ENCODE measurements at regions of chr7 and their contacts with region 1.

Region 1: GRCh38 chr7:909358-910329 is 33.3 kb downstream of the GET4 start:
- DNase-seq: peak; percentile 15
- ATAC-seq: peak; percentile 63
- H3K4me3 ChIP-seq: no peak overlapping the region
- H3K27ac ChIP-seq: no peak overlapping the region; the same call in 1 of the 2 replicates
- H3K4me1 ChIP-seq: peaks cover 1% of the 10 kb centered on the region; the same call in 1 of the 2 replicates
- H3K27me3 ChIP-seq: no peaks in the 10 kb centered on the region; the same call in 1 of the 2 replicates
- CTCF ChIP-seq: no peak
- POLR2A ChIP-seq: no peak
- RAD21 ChIP-seq: no peak

Region 2: GRCh38 chr7:379456-380138 is 530.0 kb before region 1 on chr7:
- CTCF ChIA-PET with region 1: no interaction called
- POLR2A ChIA-PET with region 1: no interaction called
- dilution Hi-C with region 1: no loop called
- in situ Hi-C with region 1: no loop called
- intact Hi-C with region 1: no loop called
- DNase-seq: no peak
- ATAC-seq: peak; percentile 27; the same call in 1 of the 2 replicates
- H3K4me3 ChIP-seq: no peak overlapping the region
- H3K27ac ChIP-seq: no peak overlapping the region
- H3K4me1 ChIP-seq: no peaks in the 10 kb centered on the region
- H3K27me3 ChIP-seq: peaks cover 49% of the 10 kb centered on the region
- CTCF ChIP-seq: no peak
- POLR2A ChIP-seq: no peak
- RAD21 ChIP-seq: no peak

Region 3: DNA sequence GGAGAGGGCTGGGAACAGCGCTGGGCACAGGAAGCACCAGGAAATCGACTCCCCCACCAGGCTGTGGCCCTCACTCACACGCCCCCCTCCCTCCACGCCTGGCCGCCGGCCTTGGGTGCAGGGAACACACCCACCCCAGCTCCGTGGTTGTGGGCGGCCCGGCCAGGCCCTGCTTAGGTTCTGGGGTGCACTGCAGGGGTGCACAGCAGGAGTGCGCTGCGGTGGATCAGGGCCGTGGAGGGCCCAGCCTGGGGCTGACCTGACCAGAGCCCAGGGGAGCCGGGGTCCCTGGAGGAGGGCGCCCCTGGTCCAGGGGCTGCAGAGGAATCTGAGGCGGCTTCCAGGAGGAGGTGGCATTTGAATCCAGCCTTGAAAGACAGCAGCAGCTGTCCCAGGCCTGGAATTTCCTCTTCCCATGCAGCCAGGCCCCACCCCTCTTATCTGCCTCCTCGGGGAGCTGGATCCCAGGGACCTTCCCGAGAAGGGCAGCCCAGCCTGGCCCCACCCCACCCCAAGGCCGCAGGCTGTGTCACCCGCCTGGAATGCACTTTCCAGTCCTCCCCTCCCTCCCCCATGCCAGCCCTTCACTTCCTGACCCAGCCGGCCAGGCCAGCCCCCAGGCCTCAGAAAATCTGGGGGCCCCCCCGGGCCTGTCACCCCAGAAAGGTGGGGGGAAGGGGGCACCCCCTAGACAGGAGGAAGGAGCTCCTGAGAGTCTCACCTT is 371.6 kb before region 1 on chr7:
- CTCF ChIA-PET with region 1: no interaction called
- POLR2A ChIA-PET with region 1: no interaction called
- dilution Hi-C with region 1: no loop called
- in situ Hi-C with region 1: no loop called
- intact Hi-C with region 1: no loop called
- DNase-seq: peak; percentile 89
- ATAC-seq: peak; percentile 87
- H3K4me3 ChIP-seq: no peak overlapping the region
- H3K27ac ChIP-seq: peak overlapping the region; percentile 77
- H3K4me1 ChIP-seq: peaks cover 31% of the 10 kb centered on the region
- H3K27me3 ChIP-seq: peaks cover 6% of the 10 kb centered on the region; the same call in 1 of the 2 replicates
- CTCF ChIP-seq: no peak
- POLR2A ChIP-seq: no peak
- RAD21 ChIP-seq: peak; percentile 26; the same call in 1 of the 2 replicates

Region 4: DNA sequence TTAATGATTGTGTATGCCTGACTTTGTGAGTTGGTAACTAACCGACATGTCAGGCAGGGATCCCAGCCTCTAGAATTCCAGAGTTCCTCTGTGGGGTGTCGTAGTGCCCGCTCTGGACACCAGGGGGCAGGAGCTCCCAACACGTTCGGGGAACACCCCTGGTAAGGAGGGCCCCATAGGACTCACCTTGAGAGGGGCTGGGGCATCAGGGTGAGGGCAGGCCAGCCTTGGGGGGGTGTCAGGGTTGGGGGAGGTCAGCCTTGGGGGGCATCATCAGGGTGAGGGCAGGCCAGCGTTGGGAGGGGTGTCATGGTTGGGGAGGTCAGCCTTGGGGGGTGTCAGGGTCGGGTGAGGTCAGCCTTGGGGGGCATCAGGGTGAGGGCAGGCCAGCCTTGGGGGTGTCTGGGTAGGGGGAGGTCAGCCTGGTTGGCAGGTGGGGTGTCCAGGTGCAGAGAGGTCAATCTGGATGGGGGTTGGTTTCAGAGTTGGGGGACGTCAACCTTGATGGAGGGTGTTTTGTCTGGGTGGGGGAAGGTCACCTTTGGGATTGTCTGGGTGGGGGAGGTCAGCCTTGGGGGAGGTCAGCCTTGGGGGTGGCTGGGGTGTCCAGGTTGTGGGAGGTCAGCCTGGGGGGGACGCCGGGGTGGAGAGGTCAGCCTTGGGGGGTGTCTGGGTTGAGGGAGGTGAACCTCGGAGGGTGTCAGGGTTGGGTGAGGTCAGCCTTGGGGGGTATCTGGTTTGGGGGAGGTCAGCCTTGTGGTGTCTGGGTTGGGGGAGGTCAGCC is 123.0 kb before region 1 on chr7:
- CTCF ChIA-PET with region 1: no interaction called
- POLR2A ChIA-PET with region 1: no interaction called
- dilution Hi-C with region 1: no loop called
- in situ Hi-C with region 1: no loop called
- intact Hi-C with region 1: no loop called
- DNase-seq: peak; percentile 51
- ATAC-seq: peak; percentile 100
- H3K4me3 ChIP-seq: no peak overlapping the region
- H3K27ac ChIP-seq: peak overlapping the region; percentile 16; the same call in 1 of the 2 replicates
- H3K4me1 ChIP-seq: no peaks in the 10 kb centered on the region
- H3K27me3 ChIP-seq: no peaks in the 10 kb centered on the region
- CTCF ChIP-seq: peak; percentile 86
- POLR2A ChIP-seq: no peak
- RAD21 ChIP-seq: peak; percentile 85

Region 5: DNA sequence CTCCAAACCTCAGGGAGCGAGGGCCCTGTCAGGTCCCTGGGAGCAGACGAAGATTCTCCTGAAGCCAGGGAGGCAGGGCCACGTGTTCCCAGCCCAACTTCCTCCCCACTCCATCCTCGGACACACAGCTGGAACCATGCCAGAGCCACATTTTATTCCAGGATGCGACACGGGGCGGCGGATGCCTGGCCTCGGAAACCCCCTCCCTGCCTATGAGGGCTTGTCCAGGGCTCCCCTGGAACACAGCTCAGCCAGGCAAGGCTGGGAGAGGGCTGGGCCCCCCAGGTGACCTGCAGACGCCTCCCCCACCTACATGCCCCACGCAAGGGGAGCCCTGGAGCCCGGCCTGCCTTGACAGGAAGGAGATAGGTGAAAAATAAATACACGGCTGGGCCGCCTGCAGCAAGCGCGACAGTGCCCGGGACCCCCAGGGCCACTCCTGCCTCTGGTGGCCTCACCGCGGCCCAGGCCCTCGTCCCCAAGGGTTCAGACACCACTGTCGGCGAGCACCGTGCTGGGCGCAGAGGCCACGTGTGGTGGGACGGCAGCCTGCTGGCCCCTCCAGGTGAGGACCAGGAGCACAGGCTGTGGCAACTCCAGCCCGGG is 11.8 kb before region 1 on chr7:
- CTCF ChIA-PET with region 1: no interaction called
- POLR2A ChIA-PET with region 1: no interaction called
- dilution Hi-C with region 1: no loop called
- in situ Hi-C with region 1: no loop called
- intact Hi-C with region 1: no loop called
- DNase-seq: no peak
- ATAC-seq: no peak
- H3K4me3 ChIP-seq: no peak overlapping the region
- H3K27ac ChIP-seq: no peak overlapping the region
- H3K4me1 ChIP-seq: peaks cover 5% of the 10 kb centered on the region
- H3K27me3 ChIP-seq: no peaks in the 10 kb centered on the region
- CTCF ChIP-seq: no peak
- POLR2A ChIP-seq: no peak
- RAD21 ChIP-seq: no peak

Region 6: DNA sequence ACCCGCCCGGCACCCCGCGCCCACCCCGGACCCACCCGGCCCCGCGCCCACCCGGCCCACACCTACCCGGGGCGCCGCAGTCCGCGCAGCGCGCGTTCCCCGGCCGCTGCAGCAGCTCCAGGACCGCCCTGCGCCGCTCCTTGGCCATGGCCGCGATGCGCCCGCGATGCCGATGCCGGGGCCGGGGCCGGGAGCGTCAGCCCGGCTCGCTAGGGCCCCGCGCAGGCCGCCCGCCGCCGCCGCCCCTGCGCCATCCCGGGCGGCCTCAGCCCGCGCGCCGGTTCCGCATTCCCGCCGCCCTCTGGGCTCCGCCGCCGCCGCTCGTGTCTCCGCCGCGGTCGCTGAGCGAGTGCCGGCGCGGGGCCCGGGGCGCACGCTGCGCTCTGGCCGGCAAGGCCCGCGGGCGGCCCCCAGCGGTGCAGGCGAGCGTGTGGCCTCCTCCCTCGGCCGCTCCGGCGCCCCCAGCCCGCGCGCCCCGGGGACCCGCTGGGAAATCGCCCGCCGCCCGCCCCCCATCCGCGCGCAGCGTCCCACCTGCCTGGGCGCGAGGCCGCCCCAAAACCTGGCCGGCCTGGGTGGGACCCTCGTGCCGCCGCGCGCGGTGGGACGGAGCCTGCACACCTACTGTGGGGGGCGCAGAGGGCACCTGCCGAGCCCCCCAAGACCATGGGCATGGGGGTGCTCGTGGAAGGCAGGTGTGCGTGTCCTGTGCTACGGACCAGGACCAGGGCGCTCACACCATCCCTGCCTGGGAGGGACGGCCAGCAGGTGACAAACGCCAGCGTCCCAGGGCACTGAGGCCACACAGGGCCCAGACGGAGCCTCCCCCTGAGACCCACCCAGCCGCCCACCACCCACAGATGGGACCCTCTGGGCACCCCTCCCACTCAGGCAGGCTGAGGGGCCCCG is 44.9 kb after region 1 on chr7 and contains the start of gene ADAP1:
- CTCF ChIA-PET with region 1: no interaction called
- POLR2A ChIA-PET with region 1: no interaction called
- dilution Hi-C with region 1: no loop called
- in situ Hi-C with region 1: no loop called
- intact Hi-C with region 1: loop called (anchors 1 kb)
- DNase-seq: peak; percentile 47
- ATAC-seq: peak; percentile 87
- H3K4me3 ChIP-seq: peak within 1 kb of the TSS; percentile 46
- H3K27ac ChIP-seq: no peak within 1 kb of the TSS
- H3K4me1 ChIP-seq: no peaks in the 10 kb centered on the region; the same call in 1 of the 2 replicates
- H3K27me3 ChIP-seq: peaks cover 18% of the 10 kb centered on the region; the same call in 1 of the 2 replicates
- CTCF ChIP-seq: peak; percentile 51
- POLR2A ChIP-seq: no peak
- RAD21 ChIP-seq: peak; percentile 64
- total RNA-seq, gene ADAP1: 1.4 and 2.2 TPM in 2 replicates

Region 7: GRCh38 chr7:1065263-1066260 is 155.9 kb after region 1 on chr7:
- CTCF ChIA-PET with region 1: no interaction called
- POLR2A ChIA-PET with region 1: no interaction called
- dilution Hi-C with region 1: no loop called
- in situ Hi-C with region 1: no loop called
- intact Hi-C with region 1: loop called (anchors 2 kb)
- DNase-seq: peak; percentile 58
- ATAC-seq: peak; percentile 98
- H3K4me3 ChIP-seq: no peak overlapping the region
- H3K27ac ChIP-seq: no peak overlapping the region
- H3K4me1 ChIP-seq: peaks cover 2% of the 10 kb centered on the region; the same call in 1 of the 2 replicates
- H3K27me3 ChIP-seq: no peaks in the 10 kb centered on the region; the same call in 1 of the 2 replicates
- CTCF ChIP-seq: peak; percentile 97
- POLR2A ChIP-seq: no peak
- RAD21 ChIP-seq: peak; percentile 97